ENCODE measurements at regions of chr1 and their contacts with region 1.

Region 1: DNA sequence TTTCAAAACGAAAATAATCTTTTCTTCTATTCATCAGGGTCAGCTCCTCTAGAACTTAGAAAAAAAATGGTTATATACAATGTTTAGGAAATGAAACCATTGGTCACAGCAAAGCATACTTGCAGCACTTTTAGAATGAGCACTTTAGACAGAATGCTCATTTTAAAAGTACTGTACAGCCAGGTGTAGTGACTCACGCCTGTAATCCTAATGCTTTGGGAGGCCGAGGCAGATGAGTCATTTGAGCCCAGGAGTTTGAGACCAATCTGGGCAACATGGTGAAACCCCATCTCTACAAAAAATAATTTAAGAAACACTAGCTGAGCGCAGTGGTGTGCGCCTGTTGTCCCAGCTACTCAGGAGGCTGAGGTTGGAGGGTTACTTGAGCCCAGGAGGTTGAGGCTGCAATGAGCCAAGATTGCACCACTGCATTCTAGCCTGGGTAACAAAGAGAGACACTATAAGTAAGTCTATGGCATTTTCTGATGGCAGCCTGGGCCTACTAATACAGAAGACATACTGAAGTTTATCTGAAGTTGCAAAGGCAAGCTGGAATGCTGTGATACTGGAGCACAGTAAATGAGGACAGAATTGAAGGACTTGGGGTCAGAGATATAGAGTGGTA is 48.9 kb upstream of the ZNF326 start:
- DNase-seq: no peak
- ATAC-seq: no peak
- H3K4me3 ChIP-seq: no peak overlapping the region
- H3K27ac ChIP-seq: no peak overlapping the region
- H3K4me1 ChIP-seq: no peaks in the 10 kb centered on the region
- H3K27me3 ChIP-seq: no peaks in the 10 kb centered on the region
- CTCF ChIP-seq: no peak

Region 2: DNA sequence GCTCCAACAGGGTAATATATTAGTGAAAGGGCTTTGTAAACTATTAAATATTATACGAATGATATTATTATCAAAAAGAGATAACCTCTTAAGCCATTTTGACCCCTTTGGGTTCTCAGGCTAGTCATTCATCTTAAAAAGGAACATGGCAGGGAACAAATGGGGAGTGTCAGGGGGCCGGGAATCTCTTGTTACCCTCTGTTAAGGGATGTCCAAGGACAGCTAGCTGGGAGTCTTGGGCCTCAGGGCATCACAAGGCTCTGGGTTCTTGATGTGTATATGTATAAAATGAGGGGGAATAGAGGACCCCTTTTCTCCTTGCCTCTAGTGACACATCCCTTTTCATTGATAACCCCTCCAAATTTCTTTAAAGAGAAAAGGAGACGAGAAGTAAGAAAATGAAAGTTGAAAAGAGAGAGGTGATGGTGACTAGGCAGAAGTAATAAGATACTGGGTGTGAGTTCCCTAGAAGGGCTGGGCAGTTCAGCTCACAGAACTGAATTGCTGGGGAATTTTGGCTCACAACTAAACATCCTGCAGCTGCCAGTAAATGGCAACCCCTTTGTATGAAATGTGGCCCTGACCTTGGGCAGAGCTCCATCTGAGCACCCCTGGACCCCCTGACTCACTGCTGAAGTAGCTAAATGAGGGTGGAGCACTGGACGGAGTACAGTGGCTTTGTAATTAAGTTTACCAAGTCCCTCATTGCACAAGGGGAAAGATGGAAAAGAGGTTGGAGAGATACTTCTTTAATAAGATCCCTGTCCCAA is 28.9 kb after region 1 on chr1:
- CTCF ChIA-PET with region 1: no interaction called
- POLR2A ChIA-PET with region 1: interaction called, 16 read pairs
- in situ Hi-C with region 1: no loop called
- intact Hi-C with region 1: no loop called
- DNase-seq: no peak
- ATAC-seq: no peak
- H3K4me3 ChIP-seq: no peak overlapping the region
- H3K27ac ChIP-seq: no peak overlapping the region
- H3K4me1 ChIP-seq: no peaks in the 10 kb centered on the region
- H3K27me3 ChIP-seq: no peaks in the 10 kb centered on the region
- CTCF ChIP-seq: no peak

Measured in Panc1 (cell line).